WTC11 (cell line): ENCODE measurements at regions of chr11 and their contacts with region 1.

Region 1: GRCh38 chr11:10208131-10208575 is 85.9 kb downstream of the SBF2 start:
- DNase-seq: no peak
- ATAC-seq: peak; percentile 76
- H3K4me3 Mint-ChIP-seq: no peak overlapping the region
- H3K27ac Mint-ChIP-seq: no peak overlapping the region
- H3K4me1 Mint-ChIP-seq: peaks cover 6% of the 10 kb centered on the region
- H3K27me3 Mint-ChIP-seq: no peaks in the 10 kb centered on the region
- CTCF ChIP-seq: peak; percentile 70

Region 2: GRCh38 chr11:10197091-10197490 is 11.1 kb before region 1 on chr11:
- CTCF ChIA-PET with region 1: interaction called, 13 read pairs
- POLR2A ChIA-PET with region 1: no interaction called
- DNase-seq: no peak
- ATAC-seq: no peak
- H3K4me3 Mint-ChIP-seq: no peak overlapping the region
- H3K27ac Mint-ChIP-seq: no peak overlapping the region
- H3K4me1 Mint-ChIP-seq: peaks cover 13% of the 10 kb centered on the region
- H3K27me3 Mint-ChIP-seq: no peaks in the 10 kb centered on the region
- CTCF ChIP-seq: no peak

Region 3: GRCh38 chr11:10247011-10247410 is 38.9 kb after region 1 on chr11:
- CTCF ChIA-PET with region 1: no interaction called
- POLR2A ChIA-PET with region 1: no interaction called
- DNase-seq: no peak
- ATAC-seq: no peak
- H3K4me3 Mint-ChIP-seq: no peak overlapping the region
- H3K27ac Mint-ChIP-seq: no peak overlapping the region
- H3K4me1 Mint-ChIP-seq: peaks cover 34% of the 10 kb centered on the region
- H3K27me3 Mint-ChIP-seq: no peaks in the 10 kb centered on the region
- CTCF ChIP-seq: no peak